Dorsolateral prefrontal cortex (tissue), 120 donors: ENCODE measurements at regions of chr21 and their contacts with region 1.

Region 1: DNA sequence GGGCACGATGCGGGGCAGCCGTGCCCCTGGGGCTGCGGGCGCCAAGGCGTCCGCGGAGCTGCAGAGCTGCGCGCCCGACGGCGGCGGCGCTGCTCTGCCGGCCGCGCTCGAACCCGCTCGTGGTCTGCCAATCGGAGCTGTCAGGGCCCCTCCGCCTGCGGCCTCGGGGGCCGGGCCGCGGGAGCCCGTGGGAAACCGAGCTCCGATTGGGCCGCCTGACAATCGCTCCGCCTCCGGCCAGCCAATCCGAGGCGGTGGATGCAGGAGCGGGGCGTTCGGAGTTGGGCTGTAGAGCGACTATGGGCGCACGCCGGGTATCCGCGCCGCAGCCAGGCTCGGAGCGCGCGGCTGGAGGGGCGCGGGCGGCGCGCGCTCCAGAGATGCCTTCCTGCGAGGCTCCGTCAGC is 100.5 kb upstream of the SOD1 start:
- DNase-seq: peak; percentile 90 to 99 (median 94)
- H3K4me3 ChIP-seq: peak overlapping the region; percentile 60 to 92 (median 79)
- H3K27ac ChIP-seq: peak overlapping the region in 42 of 59 donors; percentile 14 to 90 (median 70)
- H3K27me3 ChIP-seq: peaks cover 0 to 9% (median 0%) of the 10 kb centered on the region in 45 donors
- CTCF ChIP-seq: peak in 50 of 56 donors; percentile 6 to 74 (median 48)

Region 2: GRCh38 chr21:31498981-31499380 is 60.0 kb before region 1 on chr21:
- intact Hi-C with region 1: no loop called
- DNase-seq: no peak
- H3K4me3 ChIP-seq: no peak overlapping the region
- H3K27ac ChIP-seq: peak overlapping the region in 1 of 59 donors; percentile 31
- H3K27me3 ChIP-seq: no peaks in the 10 kb centered on the region
- CTCF ChIP-seq: peak in 8 of 56 donors; percentile 11 to 27 (median 20)

Region 3: GRCh38 chr21:31514598-31514997 is 44.4 kb before region 1 on chr21:
- intact Hi-C with region 1: loop called (anchors 2 to 5 kb)
- DNase-seq: peak; percentile 41 to 90 (median 85)
- H3K4me3 ChIP-seq: peak overlapping the region in 32 of 59 donors; percentile 3 to 52 (median 28)
- H3K27ac ChIP-seq: peak overlapping the region in 52 of 59 donors; percentile 8 to 87 (median 70)
- H3K27me3 ChIP-seq: no peaks in the 10 kb centered on the region
- CTCF ChIP-seq: peak; percentile 18 to 84 (median 65)